Cardiac septum (tissue), 1 donor: ENCODE measurements at regions of chr11 and their contacts with region 1.

Region 1: DNA sequence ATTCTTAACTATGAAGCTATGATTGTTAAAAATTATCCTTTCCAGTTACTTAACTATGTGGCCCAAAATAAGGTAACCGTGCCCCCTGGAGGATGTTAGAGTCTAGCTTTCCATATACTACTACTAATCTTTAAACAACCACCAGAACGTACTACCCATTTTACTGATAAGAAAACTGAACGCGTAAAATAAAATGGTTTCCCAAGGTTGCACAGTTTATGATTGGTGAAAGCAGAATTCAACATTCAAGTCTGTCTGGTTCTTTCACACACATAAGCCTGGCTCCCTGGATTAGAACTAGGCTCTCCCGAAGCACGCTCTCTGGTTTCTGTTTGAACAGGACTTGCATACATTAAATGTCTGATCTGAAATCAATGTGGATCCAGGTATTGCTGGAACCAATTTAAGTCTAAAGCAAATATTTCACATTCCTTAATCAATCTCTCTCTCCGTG is 437.9 kb upstream of the CCDC90B start:
- DNase-seq: no peak

Region 2: DNA sequence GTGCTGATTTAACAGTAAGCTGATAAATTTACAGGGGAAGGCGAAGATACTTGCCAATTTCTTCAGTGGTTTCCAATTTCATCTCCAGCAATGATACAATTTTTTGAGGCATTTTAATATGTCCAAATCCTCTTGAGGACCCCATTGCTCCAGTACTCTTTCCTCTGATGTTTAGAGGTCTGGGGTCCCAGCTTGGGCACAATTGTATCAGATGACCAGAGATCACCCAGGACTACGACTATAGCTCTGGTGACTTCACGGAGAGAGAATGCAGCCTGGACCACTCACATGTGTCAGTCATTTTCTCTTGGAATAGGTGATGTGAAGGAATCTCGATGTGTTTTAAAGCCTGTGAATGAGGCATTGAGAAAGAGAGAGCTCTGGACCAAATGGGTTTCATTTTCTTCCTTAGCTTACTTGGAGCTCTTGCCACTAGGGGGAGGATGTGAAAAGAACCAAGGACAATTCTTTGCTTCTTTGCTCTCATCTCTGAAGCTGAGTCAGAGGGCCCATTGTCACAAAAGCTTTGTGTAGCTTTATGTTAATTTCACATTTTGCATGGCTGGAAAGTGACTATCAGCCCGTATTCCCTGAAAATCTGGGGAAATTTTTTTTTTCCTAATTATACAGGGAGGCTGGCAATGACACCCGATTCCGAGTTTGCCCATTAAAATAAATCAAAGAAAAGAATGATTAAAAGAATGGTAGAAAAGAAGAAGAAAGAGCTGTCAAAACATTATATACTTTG is 431.2 kb before region 1 on chr11:
- intact Hi-C with region 1: loop called (anchors 10 kb)
- DNase-seq: no peak

Region 3: DNA sequence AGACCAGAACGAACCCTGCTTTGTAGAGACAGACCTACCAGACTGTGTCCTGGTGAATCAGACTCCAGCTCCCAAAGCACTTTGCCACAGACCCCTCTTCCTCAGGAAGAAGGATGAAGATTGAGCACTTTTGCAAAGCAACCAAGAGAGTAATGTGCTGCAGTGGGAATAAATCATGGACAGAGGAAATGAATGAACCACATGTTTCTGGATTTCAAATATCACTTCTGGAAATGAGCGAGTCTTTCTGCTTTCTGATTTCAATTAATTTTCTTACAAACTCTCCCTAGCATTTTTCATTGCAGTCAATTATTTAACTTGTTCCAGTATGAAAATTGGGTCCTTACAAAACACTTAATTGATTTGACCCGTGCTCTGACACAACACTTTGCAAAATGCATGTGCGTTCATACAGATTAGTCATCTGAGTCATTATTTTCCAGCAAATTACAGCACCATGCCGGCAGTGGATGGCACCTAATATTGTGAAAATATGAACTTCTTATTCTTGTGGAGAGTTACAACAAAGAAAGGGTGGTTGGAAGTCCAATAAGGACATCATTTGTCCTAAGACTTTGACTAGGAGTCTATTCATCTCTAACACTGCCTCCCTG is 122.0 kb before region 1 on chr11:
- intact Hi-C with region 1: no loop called
- DNase-seq: no peak